Ascending aorta (tissue), 2 donors: ENCODE measurements at regions of chrX and their contacts with region 1.

Region 1: GRCh38 chrX:65595460-65595876 is 60.9 kb upstream of the LAS1L start:
- DNase-seq: peak; percentile 82 to 99
- H3K4me3 ChIP-seq: no peak overlapping the region
- H3K27ac ChIP-seq: peak overlapping the region; percentile 84 to 89
- H3K4me1 ChIP-seq: peaks cover 0 to 17% of the 10 kb centered on the region in 2 donors
- H3K27me3 ChIP-seq: no peaks in the 10 kb centered on the region
- CTCF ChIP-seq: peak; percentile 99 to 100 (median 99)

Region 2: DNA sequence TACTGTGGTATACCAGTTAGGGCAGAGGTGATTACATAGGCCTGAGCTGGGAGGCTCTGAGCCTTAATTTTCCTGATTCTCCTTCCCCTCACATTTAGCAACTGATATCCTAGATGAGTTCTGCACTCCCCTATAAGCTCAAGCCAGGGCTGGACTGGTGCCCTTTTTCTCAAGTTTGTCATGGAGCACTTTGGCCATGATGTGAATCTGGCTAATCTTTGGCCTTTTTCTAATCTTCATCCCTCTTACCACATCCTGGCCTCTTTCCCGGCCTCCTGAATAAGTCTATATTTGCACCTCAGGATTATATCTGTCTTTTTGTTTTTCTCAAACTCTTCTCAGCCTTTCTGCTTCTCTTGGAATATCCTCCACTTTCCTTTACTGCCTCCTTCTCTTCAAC is 50.0 kb before region 1 on chrX:
- intact Hi-C with region 1: no loop called
- DNase-seq: no peak
- H3K4me3 ChIP-seq: no peak overlapping the region
- H3K27ac ChIP-seq: no peak overlapping the region
- H3K4me1 ChIP-seq: no peaks in the 10 kb centered on the region
- H3K27me3 ChIP-seq: no peaks in the 10 kb centered on the region
- CTCF ChIP-seq: no peak

Region 3: DNA sequence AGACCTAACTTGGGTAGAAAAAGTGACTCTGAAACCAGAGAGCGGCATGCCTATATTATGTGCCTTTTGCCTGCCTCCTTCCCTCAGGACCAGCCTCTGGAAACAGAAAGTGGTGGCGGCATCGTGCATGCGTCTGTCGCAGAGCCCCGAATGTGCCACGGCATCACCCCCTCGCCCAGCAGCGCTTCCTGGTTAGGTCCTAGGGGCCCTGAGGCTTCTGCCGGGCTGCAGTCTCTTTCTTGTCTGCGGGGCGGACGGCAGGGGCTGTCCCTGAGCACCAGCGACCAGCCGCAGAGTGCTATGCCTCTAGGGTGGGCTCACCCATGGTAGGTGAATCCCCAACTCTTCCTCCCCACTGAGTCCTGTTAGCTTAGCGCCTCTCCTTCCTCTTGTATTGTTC is 375.7 kb after region 1 on chrX:
- intact Hi-C with region 1: no loop called
- DNase-seq: no peak
- H3K4me3 ChIP-seq: peak overlapping the region in 1 of 2 donors; percentile 24
- H3K27ac ChIP-seq: no peak overlapping the region
- H3K4me1 ChIP-seq: no peaks in the 10 kb centered on the region
- H3K27me3 ChIP-seq: no peaks in the 10 kb centered on the region
- CTCF ChIP-seq: no peak

Region 4: GRCh38 chrX:66163849-66164411 is 568.5 kb after region 1 on chrX and contains the start of gene HEPH:
- intact Hi-C with region 1: loop called (anchors 5 kb)
- DNase-seq: no peak
- H3K4me3 ChIP-seq: peak within 1 kb of the TSS; percentile 48 to 65
- H3K27ac ChIP-seq: peak within 1 kb of the TSS; percentile 42 to 70
- H3K4me1 ChIP-seq: no peaks in the 10 kb centered on the region
- H3K27me3 ChIP-seq: no peaks in the 10 kb centered on the region
- CTCF ChIP-seq: no peak
- total RNA-seq, gene HEPH: 38.8 TPM

Region 5: GRCh38 chrX:66833426-66833825 is 1238.0 kb after region 1 on chrX:
- intact Hi-C with region 1: no loop called
- DNase-seq: no peak
- H3K4me3 ChIP-seq: no peak overlapping the region
- H3K27ac ChIP-seq: no peak overlapping the region
- H3K4me1 ChIP-seq: no peaks in the 10 kb centered on the region
- H3K27me3 ChIP-seq: no peaks in the 10 kb centered on the region
- CTCF ChIP-seq: no peak